Right cardiac atrium (tissue), 5 donors: ENCODE measurements at regions of chr3 and their contacts with region 1.

Region 1: GRCh38 chr3:133821767-133822638 is 16.4 kb downstream of the SRPRB start:
- DNase-seq: peak; percentile 72 to 89 (median 86)
- ATAC-seq: peak; percentile 49 to 87
- H3K4me3 ChIP-seq: no peak overlapping the region
- H3K27ac ChIP-seq: no peak overlapping the region
- H3K4me1 ChIP-seq: no peaks in the 10 kb centered on the region
- H3K27me3 ChIP-seq: no peaks in the 10 kb centered on the region

Region 2: DNA sequence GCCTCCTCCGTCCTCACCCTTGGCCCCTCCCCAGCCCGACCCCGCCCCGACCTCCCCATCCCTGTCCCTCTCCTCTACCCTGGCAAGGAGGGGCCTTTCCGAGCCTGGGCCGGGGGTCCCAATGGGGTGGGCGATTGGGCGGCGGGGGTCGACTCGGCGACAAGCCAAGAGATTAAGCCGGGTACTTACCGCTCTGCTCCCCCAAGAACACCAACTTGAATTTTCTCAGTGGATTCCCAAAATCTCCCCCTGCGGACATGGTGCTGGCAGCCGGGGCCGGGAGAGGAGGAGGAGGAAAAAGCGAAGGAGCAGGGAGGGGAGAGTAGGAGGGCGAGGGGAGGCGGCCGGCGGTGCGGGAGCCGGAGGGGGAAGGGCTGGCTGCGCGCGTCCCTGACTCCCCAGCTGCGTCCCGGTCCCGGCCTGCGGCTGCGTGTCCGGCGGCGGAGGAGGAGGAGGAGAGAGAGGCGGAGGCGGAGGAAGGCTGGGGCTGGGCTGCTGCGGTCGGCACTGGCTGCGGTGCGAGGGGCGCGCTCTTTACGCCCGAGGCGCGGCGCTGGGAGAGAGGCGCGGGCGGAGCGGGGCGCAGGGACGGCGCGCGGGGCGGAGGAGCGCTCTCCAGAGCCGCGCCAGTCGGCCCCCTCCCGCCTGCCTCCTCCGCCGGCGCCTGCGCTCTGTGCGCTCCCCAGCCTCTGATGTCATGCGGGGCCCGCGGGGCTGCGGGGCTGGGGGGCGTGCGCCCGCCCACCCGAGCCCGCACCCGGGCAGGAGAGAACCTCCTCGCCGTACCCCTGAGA is 73.4 kb after region 1 on chr3 and contains the start of gene RAB6B:
- intact Hi-C with region 1: loop called in 2 of 4 experiments (anchors 5 kb)
- DNase-seq: peak; percentile 58 to 82 (median 82)
- ATAC-seq: peak; percentile 89 to 92
- H3K4me3 ChIP-seq: peak within 1 kb of the TSS; percentile 62
- H3K27ac ChIP-seq: no peak within 1 kb of the TSS
- H3K4me1 ChIP-seq: peaks cover 9% of the 10 kb centered on the region
- H3K27me3 ChIP-seq: no peaks in the 10 kb centered on the region
- total RNA-seq, gene RAB6B: 27.2 to 48.1 (median 36.1) TPM

Region 3: DNA sequence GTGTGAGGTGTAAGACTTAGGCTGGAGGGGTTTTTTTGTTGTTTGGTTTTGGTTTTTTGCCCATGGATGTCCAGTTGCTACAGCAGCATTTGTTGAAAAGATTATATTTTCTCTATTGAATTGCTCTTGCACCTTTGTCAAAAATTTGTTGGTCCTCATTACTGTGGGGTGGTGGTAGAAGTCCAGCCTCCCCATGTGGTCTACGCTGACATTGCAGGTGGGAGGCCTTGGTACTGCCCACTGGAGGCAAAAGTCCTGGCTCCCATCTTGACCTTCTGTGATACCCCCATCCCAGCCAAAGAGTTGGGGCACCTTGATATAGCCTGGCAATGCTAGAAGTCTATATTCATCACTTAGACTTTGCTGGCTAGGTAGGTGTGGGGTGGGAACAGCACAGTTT is 79.1 kb after region 1 on chr3:
- intact Hi-C with region 1: loop called in 2 of 4 experiments (anchors 5 kb)
- DNase-seq: no peak
- ATAC-seq: peak in 1 of 2 donors; percentile 47
- H3K4me3 ChIP-seq: no peak overlapping the region
- H3K27ac ChIP-seq: no peak overlapping the region
- H3K4me1 ChIP-seq: no peaks in the 10 kb centered on the region
- H3K27me3 ChIP-seq: no peaks in the 10 kb centered on the region